ENCODE measurements at regions of chr1 and their contacts with region 1.

Region 1: GRCh38 chr1:228471762-228472398 is 15.3 kb upstream of the RNF187 start:
- DNase-seq: peak; percentile 47
- H3K4me3 Mint-ChIP-seq: no peak overlapping the region
- H3K27ac Mint-ChIP-seq: no peak overlapping the region
- H3K4me1 Mint-ChIP-seq: peaks cover 22% of the 10 kb centered on the region
- H3K27me3 Mint-ChIP-seq: peaks cover 79% of the 10 kb centered on the region

Region 2: GRCh38 chr1:228457396-228458176 is 14.3 kb before region 1 on chr1:
- CTCF ChIA-PET with region 1: interaction called, 16 read pairs
- DNase-seq: peak; percentile 92
- H3K4me3 Mint-ChIP-seq: peak overlapping the region; percentile 89
- H3K27ac Mint-ChIP-seq: peak overlapping the region; percentile 99
- H3K4me1 Mint-ChIP-seq: peaks cover 65% of the 10 kb centered on the region
- H3K27me3 Mint-ChIP-seq: peaks cover 9% of the 10 kb centered on the region

Region 3: DNA sequence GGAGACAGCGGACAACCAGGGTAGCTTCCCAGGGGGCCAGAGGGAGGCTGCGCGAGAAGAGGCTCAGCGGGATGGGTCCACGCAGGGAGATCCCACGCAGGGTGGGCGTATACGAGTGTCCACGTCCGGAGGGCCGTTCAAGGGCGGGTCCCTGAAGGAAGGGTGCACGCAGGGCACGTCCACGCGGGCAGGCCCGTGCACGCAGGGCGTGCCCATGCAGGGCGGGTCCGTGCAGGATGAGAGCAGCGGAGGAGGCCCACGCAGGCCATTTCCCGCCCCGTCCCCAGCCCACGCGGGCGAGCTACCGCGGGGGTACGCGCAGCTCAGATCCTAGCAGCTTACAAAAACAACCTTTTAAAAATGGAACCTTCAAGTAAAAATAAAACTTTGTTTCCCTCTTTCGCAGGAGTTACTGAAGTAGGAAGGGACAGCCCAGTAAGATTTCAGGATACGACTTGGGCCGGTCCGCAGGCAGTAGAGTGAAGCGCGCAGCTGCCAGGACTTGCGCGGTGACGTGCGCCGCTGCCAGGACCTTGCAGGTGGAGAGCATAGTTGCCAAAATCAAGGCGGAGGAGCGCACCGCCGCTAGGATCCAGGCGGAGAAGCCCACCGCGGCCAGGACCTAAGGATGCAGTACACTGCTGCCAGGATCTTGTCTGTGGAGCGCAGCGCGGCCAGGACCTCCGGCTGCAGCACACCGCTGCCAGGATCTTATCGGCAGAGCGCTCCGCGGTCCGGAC is 14.9 kb after region 1 on chr1:
- CTCF ChIA-PET with region 1: interaction called, 13 read pairs
- DNase-seq: peak; percentile 85
- H3K4me3 Mint-ChIP-seq: peak overlapping the region; percentile 91
- H3K27ac Mint-ChIP-seq: peak overlapping the region; percentile 100
- H3K4me1 Mint-ChIP-seq: peaks cover 48% of the 10 kb centered on the region
- H3K27me3 Mint-ChIP-seq: peaks cover 19% of the 10 kb centered on the region

Region 4: DNA sequence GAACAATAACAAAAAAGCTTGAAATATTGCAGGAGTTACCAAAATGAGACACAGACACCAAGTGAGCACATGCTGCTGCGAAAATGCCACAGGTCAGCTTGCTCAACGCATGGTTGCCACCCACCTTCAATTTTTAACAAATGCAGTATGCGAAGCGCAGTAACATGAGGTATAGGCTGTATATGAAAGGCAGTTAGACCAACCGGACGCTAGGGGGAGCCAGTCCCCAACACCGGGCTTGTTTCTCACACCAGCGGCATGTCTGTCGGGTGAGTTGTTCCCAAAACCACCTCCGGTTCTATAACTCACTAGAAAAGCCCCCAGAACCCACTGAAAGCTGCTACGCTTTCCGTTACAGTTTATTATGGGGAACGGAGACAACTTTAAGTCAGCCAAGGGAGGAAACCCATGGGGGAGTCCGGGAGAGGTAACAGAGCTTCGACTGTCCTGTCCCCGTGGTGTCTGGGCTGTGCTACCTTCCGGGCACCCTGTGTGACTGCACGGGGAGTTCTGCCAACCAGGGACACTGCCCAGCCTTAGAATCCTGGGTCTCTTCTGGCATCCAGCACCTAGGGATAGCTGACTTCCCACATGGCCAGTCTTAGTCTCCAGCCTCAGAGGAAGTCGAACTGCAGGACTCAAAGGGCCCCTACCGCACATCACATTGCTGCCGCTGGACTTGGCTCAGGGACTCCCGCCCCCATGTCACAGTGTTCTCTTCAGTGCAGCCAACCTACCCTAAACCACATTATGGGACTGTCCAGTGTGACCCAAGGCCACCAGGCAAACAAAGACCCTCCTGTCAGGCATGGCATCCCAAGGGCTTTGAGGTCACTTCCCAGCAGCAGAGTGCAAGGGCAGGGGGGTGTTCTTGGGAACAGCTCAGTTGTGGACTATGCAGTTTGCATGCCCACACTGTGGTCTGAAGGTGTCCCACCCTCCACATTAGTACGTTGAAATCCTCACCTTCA is 29.3 kb after region 1 on chr1:
- CTCF ChIA-PET with region 1: interaction called, 29 read pairs
- DNase-seq: peak; percentile 91
- H3K4me3 Mint-ChIP-seq: peak overlapping the region; percentile 61
- H3K27ac Mint-ChIP-seq: peak overlapping the region; percentile 70
- H3K4me1 Mint-ChIP-seq: peaks cover 25% of the 10 kb centered on the region
- H3K27me3 Mint-ChIP-seq: peaks cover 21% of the 10 kb centered on the region

Region 5: DNA sequence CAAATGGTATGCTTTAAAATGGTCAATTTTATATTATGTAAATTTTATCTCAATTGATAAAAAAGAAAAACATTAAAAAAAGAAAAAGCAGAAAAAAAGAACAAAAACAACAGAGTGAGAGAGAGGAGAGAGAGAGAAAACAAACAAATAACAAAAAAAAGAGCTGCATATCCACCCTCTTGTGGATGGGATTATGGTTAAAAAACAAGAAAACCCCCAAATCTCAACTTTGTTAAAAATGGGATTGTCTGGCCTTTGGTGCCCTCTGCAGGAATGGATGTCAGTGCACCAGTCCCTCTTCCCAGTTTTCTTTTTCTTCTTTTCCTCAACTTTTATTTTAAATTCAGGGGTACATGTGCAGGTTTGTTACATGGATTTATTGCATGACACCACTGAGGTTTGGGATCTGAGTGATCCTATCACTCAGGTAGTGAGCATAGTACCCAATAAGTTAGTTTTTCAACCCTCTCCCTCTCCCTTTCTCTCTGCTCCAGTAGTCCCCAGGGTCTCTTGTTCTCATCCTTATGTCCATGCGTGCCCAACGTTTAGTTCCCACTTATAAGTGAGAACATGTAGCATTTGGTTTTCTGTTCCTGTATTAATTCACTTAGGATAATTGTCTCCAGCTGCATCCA is 43.4 kb after region 1 on chr1:
- CTCF ChIA-PET with region 1: interaction called, 25 read pairs
- DNase-seq: peak; percentile 50
- H3K4me3 Mint-ChIP-seq: no peak overlapping the region
- H3K27ac Mint-ChIP-seq: no peak overlapping the region
- H3K4me1 Mint-ChIP-seq: peaks cover 16% of the 10 kb centered on the region
- H3K27me3 Mint-ChIP-seq: peaks cover 48% of the 10 kb centered on the region

Measured in activated naive CD4-positive, alpha-beta T cell treated with anti-CD3 and anti-CD28 coated beads, Interleukin-2, amount 10 ng/mL, durations not matched to agents 7 days and 5 days (primary cell).